ENCODE measurements at regions of chr9 and their contacts with region 1.

Region 1: DNA sequence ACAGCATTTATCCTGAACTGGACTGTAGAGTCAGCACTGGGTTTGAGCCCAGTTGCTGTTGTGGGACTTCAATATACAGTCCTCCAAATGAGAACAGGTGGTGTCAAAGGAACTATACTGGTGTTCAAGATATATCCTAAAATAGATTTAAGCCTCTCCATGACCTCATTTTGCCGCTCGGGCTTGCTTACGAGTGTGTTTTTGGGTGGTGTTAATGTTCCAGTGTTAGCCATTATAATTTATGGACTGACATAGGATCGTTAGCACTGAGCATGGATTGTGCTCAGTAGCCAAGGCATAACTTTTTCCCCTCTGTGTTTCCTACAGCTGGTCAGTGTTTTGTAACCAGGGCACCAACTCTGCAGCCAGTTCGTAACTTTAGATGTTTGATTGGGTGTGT is 306.6 kb downstream of the SPATA31D1 start:
- DNase-seq: no peak
- ATAC-seq: no peak
- H3K4me3 ChIP-seq: no peak overlapping the region
- H3K27ac ChIP-seq: no peak overlapping the region
- H3K4me1 ChIP-seq: no peaks in the 10 kb centered on the region
- H3K27me3 ChIP-seq: no peaks in the 10 kb centered on the region
- CTCF ChIP-seq: no peak
- EP300 ChIP-seq: no peak
- POLR2A ChIP-seq: no peak
- RAD21 ChIP-seq: no peak

Region 2: DNA sequence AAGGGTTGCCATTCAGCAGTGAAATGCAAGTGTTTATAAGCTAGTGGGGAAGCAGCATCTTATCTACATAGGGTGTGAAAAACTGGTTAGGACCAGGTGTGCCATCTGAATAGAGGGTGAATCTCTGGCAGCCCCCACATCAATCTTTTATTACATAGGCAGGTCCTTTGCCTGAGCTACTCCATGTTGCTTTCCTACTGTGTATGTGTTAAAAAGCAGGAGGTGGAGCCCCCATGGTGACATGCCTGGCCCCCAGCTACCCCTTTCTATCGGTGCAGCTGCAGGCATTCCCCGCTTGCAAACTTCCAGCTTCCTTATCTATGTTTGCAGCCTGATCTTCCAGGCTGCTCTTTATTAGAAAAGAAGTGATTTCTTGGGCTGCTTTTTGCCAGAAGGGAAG is 46.9 kb after region 1 on chr9:
- CTCF ChIA-PET with region 1: no interaction called
- POLR2A ChIA-PET with region 1: no interaction called
- RAD21 ChIA-PET with region 1: no interaction called
- SMC1A ChIA-PET with region 1: no interaction called
- in situ Hi-C with region 1: no loop called
- intact Hi-C with region 1: loop called (anchors 5 kb)
- DNase-seq: no peak
- ATAC-seq: no peak
- H3K4me3 ChIP-seq: no peak overlapping the region
- H3K27ac ChIP-seq: no peak overlapping the region
- H3K4me1 ChIP-seq: no peaks in the 10 kb centered on the region
- H3K27me3 ChIP-seq: no peaks in the 10 kb centered on the region
- CTCF ChIP-seq: no peak
- EP300 ChIP-seq: no peak
- POLR2A ChIP-seq: no peak
- RAD21 ChIP-seq: no peak